IMR-90 (cell line): ENCODE measurements at regions of chr10 and their contacts with region 1.

Region 1: DNA sequence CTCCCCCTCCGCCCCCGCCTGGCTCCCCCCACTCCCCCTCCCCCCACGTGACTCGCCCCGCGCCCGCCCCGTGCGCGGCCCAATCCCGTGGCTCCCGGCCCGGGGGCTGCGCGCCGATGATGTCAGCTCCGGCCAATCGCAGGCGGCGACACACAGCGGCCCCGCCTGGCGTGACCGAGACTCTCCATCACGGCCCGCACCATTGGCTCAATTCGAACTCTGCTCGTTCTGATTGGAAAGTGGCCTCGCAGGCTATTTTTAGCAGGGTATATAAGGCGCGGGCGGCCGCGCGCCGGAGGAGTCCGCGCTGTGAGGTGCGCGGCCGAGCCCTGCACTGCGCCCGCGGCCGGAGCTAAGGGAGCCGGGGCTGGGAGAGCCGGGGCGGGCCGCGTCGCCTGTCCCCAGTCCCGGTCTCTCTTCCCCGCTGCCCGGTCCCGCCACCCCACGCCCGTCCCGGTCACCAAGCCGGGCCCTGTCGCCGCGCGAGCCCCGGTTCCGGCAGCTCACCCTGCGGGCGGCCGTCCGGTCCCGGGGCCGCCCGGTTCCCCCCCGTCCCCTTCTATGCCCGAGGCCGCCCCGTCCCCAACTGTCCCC is 345 bp upstream of the KLF6 start:
- DNase-seq: peak; percentile 97
- ATAC-seq: peak; percentile 81
- H3K4me3 ChIP-seq: peak overlapping the region; percentile 91
- H3K27ac ChIP-seq: peak overlapping the region; percentile 97
- H3K4me1 ChIP-seq: peaks cover 15% of the 10 kb centered on the region
- H3K27me3 ChIP-seq: no peaks in the 10 kb centered on the region
- CTCF ChIP-seq: no peak
- POLR2A ChIP-seq: peak; percentile 94
- RAD21 ChIP-seq: peak; percentile 18; the same call in 1 of the 2 replicates

Region 2: DNA sequence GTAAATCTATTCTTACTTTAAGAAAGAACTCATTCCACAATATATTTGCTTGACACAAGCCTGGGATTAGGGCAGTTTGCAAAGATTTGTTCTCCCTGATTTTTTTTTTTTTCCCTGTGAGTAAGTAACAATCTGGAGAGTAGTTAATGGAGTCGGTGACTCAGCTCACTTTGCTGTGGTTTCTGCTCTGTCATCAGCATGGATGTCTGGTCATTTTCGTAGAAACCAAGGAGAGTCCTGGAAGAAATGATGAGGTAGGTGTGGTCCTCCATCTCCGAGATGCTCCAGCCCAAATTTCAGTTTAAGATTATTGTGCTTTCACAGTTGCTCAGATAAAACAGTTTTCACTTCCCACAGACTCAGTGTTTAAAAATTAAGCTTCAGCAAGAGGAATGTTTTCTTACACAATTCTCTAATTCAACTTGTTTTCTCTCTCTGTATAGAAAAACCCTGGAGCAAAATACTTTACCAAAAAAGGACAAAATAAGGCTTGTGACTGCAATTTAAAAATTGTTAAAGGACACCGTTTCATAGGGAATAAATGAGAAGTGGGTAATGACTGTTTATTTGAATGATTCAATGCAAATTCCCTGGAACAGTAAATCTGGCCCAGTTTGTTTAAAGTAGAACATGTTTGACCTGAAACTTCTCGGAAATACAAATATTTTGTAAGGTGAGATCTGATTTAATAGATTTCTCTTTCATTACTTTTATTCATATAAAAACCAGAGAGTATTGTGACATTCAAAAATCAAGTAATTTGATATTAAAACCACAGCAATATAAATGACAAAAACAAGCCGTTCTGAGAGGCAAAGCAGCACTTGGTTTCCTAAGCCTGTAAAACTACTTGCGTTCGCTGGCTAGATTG is 536.2 kb before region 1 on chr10:
- CTCF ChIA-PET with region 1: no interaction called
- POLR2A ChIA-PET with region 1: no interaction called
- dilution Hi-C with region 1: no loop called
- in situ Hi-C with region 1: no loop called
- intact Hi-C with region 1: loop called (anchors 2 kb)
- DNase-seq: peak; percentile 94
- ATAC-seq: peak; percentile 95
- H3K4me3 ChIP-seq: peak overlapping the region; percentile 11; the same call in 1 of the 2 replicates
- H3K27ac ChIP-seq: peak overlapping the region; percentile 89
- H3K4me1 ChIP-seq: peaks cover 4% of the 10 kb centered on the region
- H3K27me3 ChIP-seq: no peaks in the 10 kb centered on the region
- CTCF ChIP-seq: no peak
- POLR2A ChIP-seq: no peak
- RAD21 ChIP-seq: no peak; the same call in 1 of the 2 replicates

Region 3: DNA sequence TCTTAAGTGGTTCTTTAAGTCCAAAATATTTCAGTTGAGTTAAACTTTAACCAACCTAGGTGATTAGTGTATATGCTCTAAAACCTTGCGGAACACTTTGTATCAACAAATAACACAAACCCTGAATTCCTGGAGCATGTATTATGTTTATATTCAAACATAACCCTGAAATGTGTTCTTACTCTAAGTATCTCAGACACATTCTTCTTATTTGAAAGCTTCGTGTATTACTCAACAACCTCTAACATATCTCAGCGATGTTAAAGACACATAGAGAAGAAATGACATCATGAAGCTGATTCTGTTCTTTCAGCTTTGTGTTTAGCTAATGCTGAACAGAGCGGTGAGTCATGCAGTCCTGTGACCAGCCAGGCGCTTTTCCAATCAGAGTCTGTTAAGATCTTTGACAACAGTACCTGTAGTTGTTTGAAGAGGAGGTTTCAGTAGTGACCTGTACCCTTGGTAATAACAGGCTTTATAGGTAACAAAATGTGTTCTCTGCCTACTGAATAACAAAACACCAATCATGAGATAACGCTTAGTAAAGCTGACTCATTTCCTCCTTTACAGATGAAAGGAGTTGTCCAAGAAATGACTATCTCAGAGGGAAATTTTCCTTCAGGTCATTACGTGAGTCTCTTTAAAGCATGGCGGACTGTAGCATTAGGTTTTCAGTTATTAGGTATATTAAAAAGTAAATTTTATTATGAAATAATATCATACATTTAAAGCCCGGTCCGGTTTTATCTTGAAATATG is 67.0 kb after region 1 on chr10:
- CTCF ChIA-PET with region 1: no interaction called
- POLR2A ChIA-PET with region 1: interaction called, 7 read pairs
- dilution Hi-C with region 1: no loop called
- in situ Hi-C with region 1: no loop called
- intact Hi-C with region 1: loop called (anchors 2 kb)
- DNase-seq: peak; percentile 99
- ATAC-seq: peak; percentile 88
- H3K4me3 ChIP-seq: no peak overlapping the region
- H3K27ac ChIP-seq: peak overlapping the region; percentile 85
- H3K4me1 ChIP-seq: peaks cover 19% of the 10 kb centered on the region
- H3K27me3 ChIP-seq: no peaks in the 10 kb centered on the region
- CTCF ChIP-seq: no peak
- POLR2A ChIP-seq: peak; percentile 12
- RAD21 ChIP-seq: no peak; the same call in 1 of the 2 replicates

Region 4: DNA sequence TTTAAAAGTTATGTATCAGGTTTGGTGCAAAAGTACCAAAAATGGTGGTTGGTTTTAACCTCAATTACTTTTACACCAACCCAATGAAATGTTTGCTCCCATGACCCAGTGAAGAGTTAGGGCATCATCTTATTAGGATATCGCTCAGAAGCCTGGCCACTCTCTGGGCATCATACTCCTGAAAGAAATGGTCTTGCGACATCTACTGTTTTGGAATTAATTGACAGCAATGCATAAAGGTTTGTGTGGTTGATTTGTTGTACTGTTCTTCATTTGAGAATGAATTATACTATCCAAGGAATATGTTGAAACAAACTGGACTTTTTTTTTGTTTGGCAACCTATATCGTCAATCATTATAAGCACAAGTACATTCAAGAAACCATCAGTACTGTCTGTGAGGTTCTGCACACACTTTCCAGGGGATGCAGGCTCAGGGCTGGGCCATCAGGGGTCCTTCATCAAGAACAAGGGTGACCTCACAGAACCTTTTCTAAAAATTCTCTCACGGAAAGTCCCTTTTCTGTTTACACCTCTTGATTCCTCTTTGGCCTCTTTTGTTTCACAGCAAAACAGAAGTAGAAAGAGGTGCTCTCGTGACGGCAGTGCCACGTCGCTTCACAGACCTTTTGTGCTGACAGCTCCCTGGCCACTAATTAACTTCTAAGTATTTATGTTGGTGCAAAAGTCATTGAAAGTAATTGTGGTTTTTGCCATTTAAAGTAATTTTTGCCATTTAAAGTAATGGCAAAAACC is 116.9 kb after region 1 on chr10:
- CTCF ChIA-PET with region 1: interaction called, 3 read pairs
- POLR2A ChIA-PET with region 1: interaction called, 10 read pairs
- dilution Hi-C with region 1: no loop called
- in situ Hi-C with region 1: no loop called
- intact Hi-C with region 1: loop called (anchors 1 kb)
- DNase-seq: no peak
- ATAC-seq: no peak
- H3K4me3 ChIP-seq: no peak overlapping the region
- H3K27ac ChIP-seq: peak overlapping the region; percentile 6; the same call in 1 of the 2 replicates
- H3K4me1 ChIP-seq: peaks cover 10% of the 10 kb centered on the region
- H3K27me3 ChIP-seq: no peaks in the 10 kb centered on the region
- CTCF ChIP-seq: no peak
- POLR2A ChIP-seq: no peak
- RAD21 ChIP-seq: no peak

Region 5: DNA sequence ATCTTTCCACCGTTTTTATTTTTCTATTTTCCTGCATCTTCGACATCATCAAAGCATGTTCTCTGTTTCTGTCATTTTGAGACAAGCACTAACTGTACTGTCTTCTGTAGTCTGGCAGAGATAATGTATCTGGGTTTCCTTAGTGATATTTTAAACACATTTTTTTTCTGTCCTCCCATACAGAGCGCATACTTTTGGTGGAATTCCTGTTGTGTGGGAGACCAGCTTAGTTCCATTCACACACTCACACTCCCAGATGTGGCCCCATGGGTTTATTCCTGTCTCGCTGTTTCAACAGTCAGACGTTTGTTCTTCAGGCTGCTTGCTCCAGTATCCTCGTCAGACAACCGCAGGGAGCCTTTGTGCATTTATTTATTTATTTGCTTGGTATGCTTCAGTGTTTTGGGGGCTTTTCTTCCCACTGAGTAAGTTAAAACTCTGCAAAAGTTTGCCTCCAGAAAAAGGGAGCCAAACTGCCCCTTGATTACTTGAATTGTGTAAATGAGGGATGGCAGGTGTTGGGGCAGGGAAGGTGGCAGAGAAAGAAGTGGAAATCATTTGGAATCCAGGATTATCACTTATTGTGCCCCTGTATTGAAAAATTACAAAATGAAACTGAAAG is 456.5 kb after region 1 on chr10:
- CTCF ChIA-PET with region 1: interaction called, 3 read pairs
- POLR2A ChIA-PET with region 1: interaction called, 6 read pairs
- dilution Hi-C with region 1: no loop called
- in situ Hi-C with region 1: loop called (anchors 5 kb)
- intact Hi-C with region 1: loop called (anchors 2 kb)
- DNase-seq: peak; percentile 100
- ATAC-seq: peak; percentile 82
- H3K4me3 ChIP-seq: peak overlapping the region; percentile 4; the same call in 1 of the 2 replicates
- H3K27ac ChIP-seq: peak overlapping the region; percentile 68
- H3K4me1 ChIP-seq: peaks cover 11% of the 10 kb centered on the region
- H3K27me3 ChIP-seq: no peaks in the 10 kb centered on the region
- CTCF ChIP-seq: no peak
- POLR2A ChIP-seq: peak; percentile 73; the same call in 1 of the 2 replicates
- RAD21 ChIP-seq: peak; percentile 20; the same call in 1 of the 2 replicates

Region 6: DNA sequence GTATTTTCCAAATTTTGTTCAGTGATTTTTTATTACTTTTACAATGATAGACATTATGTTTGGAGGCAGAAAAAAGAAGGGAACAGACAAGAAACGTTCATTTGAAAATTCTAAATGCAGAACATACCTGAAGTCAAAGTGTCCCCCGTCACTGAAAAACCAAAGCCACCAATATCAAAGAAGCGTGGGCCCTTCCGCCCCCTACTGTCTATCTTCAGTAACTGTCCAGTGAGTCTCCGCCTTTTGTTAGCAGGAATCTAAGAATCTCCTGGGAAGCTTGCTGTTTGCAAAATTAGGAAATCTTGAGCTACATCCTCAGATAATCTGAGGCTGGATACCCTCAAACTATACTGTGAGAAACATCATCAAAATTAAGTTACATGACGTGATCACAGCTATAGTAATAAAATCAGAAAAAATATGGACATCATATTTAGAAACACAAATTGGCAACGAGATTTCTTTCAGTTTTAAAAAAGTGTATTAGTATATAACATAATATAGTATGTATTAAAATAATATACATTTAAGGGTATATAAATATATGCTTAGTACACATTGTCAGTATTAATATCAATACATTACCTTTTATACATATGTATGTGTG is 871.3 kb after region 1 on chr10:
- CTCF ChIA-PET with region 1: no interaction called
- POLR2A ChIA-PET with region 1: interaction called, 4 read pairs
- dilution Hi-C with region 1: no loop called
- in situ Hi-C with region 1: loop called (anchors 5 kb)
- intact Hi-C with region 1: loop called (anchors 2 kb)
- DNase-seq: peak; percentile 67
- ATAC-seq: peak; percentile 72
- H3K4me3 ChIP-seq: no peak overlapping the region
- H3K27ac ChIP-seq: no peak overlapping the region
- H3K4me1 ChIP-seq: peaks cover 2% of the 10 kb centered on the region
- H3K27me3 ChIP-seq: no peaks in the 10 kb centered on the region
- CTCF ChIP-seq: peak; percentile 82
- POLR2A ChIP-seq: peak; percentile 45; the same call in 1 of the 2 replicates
- RAD21 ChIP-seq: peak; percentile 96